ENCODE measurements at regions of chr16 and their contacts with region 1.

Region 1: DNA sequence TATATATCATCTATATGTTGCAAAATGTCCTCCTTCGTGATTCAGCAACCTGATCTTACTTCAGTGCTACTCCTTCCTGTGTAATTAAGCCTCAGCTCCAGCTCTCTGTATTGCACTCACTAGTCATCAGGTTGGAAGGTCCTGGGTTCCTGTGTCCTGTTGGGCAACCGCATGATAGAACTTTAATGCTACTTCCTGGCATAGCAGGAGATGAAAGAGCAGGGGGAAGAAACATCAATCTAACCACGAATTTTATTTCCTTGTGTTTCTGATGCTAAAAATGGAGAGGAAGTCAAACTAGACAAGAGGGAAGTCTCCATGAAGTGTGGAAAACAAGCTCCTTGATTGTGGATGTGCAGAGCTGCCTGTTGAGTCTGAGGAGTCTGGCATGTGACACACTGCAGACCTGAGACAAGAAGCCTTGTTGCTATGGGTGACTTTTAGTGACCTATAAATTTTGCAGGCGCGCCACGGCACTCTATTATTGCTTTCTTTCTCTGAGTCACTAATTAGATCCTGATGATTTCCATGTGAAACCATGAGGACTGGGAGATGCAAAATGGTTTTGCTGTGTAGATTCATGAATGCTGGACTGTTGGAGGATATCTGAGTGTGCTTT is 25.6 kb downstream of the IGSF6 start:
- DNase-seq: peak in 1 of 2 experiments; percentile 46
- ATAC-seq: peak; percentile 70 to 74; a peak in 5 of 6 replicates
- H3K4me3 ChIP-seq: no peak overlapping the region
- H3K27ac ChIP-seq: peak overlapping the region in 1 of 2 experiments; percentile 25; a peak in 4 of 6 replicates
- H3K4me1 ChIP-seq: peaks cover 22% of the 10 kb centered on the region
- CTCF ChIP-seq: no peak
- EP300 ChIP-seq: no peak
- POLR2A ChIP-seq: no peak
- RAD21 ChIP-seq: no peak

Region 2: DNA sequence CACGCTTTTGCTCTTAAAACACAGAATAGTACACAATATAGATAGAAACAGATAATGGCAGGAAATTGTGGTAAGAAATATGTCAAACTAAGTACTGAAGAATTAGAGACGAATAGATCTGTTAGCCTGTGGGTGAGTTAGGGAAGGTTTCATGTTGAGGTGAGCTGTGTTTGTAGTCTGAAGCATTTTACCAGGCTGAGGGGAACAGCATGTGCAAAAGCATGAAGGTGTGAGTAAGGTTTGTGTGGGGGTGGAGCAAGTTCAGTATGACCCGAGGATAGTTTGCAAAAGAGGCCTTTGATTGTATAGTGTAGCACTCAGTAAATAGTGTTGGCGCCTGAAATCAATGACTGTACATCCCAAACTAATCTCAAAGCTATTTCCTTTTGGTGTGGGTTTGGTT is 11.8 kb after region 1 on chr16:
- CTCF ChIA-PET with region 1: interaction called, 17 read pairs
- POLR2A ChIA-PET with region 1: no interaction called
- DNase-seq: no peak
- ATAC-seq: peak in 1 of 2 experiments; percentile 66; a peak in 3 of 6 replicates
- H3K4me3 ChIP-seq: no peak overlapping the region
- H3K27ac ChIP-seq: no peak overlapping the region
- H3K4me1 ChIP-seq: peaks cover 7% of the 10 kb centered on the region; the same call in 2 of the 3 replicates
- CTCF ChIP-seq: no peak
- EP300 ChIP-seq: no peak
- POLR2A ChIP-seq: no peak
- RAD21 ChIP-seq: no peak

Region 3: GRCh38 chr16:21653571-21653970 is 26.8 kb after region 1 on chr16:
- CTCF ChIA-PET with region 1: no interaction called
- POLR2A ChIA-PET with region 1: no interaction called
- DNase-seq: no peak
- ATAC-seq: peak in 1 of 2 experiments; percentile 54; a peak in 2 of 6 replicates
- H3K4me3 ChIP-seq: no peak overlapping the region
- H3K27ac ChIP-seq: no peak overlapping the region
- H3K4me1 ChIP-seq: 0 out of 3 replicates have a peak, but pooled peaks cover 3% of the 10 kb centered on the region
- CTCF ChIP-seq: no peak
- EP300 ChIP-seq: no peak
- POLR2A ChIP-seq: no peak
- RAD21 ChIP-seq: no peak

Measured in A549 (cell line).